Testis (tissue), 5 donors: ENCODE measurements at regions of chr2 and their contacts with region 1.

Region 1: DNA sequence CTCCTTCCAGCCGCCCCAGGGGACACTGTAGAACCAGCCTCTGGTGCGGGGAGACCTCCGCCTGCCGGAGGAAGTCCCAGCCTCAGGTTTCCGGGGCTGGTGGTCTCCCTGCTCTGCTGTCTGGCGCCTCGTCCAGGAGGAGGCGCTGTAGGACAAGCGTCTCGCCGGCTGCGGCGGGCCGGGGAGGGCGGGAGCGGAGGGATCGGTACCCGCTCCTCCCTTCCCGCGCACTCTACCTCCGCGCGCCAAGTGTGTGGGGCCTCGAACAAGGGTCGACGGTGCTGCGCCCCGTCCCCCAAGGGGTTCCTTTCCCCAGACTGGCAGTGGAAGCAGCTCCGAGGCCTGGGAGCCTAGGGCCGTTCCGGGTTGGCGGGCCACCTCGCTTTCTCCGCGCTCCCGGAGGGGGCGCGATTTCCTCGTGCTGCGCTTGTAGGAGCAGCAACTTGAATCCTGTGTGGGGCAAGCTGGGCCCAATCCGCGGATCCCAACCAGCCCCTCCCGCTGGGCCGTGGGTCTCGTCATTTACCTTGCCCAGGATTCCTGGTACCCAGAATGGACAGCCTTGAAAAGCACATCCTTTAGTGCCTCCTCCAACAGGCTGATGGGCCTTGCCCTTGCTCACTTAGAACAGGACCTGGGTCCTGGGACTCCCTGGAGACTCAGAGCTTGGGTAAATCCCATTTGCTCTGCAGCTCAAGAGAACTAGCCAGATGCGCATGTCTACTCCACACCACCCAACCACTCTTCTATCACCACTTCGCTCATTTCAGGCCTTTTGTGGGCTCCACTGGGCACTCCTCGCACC is 10.6 kb upstream of the HOXD4 start:
- DNase-seq: peak; percentile 84
- H3K4me3 ChIP-seq: peak overlapping the region; percentile 87 to 89
- H3K27ac ChIP-seq: peak overlapping the region; percentile 79 to 99
- H3K4me1 ChIP-seq: peaks cover under 1% of the 10 kb centered on the region
- H3K27me3 ChIP-seq: no peaks in the 10 kb centered on the region
- CTCF ChIP-seq: peak; percentile 91 to 98 (median 97)
- POLR2A ChIP-seq: no peak

Region 2: DNA sequence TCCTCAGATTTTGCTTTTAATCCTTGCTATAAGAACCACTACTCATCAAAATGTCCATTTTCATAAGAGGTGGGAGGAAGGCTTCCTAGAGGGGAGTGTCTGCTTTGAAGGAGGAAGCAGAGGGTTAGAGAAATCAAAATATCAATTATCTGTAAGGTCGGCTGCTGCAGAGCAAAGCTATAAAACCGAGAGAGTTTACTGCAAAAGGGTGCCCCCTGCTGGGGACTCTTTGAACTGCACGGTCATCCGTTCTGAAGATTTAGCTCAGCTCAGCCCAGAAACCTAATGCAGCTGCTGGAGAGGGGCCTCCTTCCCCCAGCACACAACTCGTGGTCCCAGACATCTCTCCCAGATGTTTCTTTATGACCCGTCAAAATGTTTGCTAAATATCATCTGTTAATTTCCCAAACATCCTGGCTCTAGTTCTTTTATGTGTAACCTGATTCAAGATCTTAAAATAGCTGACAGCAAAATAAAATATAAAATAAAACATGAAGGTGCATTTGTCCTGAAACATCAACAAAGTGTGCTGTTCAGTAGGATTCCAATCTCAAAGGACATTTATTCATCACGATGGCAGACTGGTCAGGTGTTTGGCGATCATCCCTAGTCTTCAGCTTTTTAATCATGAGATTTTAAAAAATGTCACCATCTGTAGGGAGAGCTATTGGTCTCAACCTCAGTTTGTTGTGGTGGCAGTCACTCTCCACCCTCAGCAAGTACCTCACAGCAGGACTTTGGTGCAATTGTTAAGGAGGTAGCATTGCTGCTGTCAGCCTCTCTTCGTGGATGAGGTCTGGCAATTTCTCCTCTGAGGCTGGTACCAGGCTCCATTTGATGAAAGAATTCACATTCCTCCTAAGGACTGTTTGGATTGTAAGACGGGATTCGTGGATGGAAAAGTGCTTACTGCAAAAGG is 314.4 kb after region 1 on chr2:
- intact Hi-C with region 1: loop called (anchors 10 kb)
- DNase-seq: peak; percentile 95
- H3K4me3 ChIP-seq: no peak overlapping the region
- H3K27ac ChIP-seq: no peak overlapping the region
- H3K4me1 ChIP-seq: peaks cover 7% of the 10 kb centered on the region
- H3K27me3 ChIP-seq: no peaks in the 10 kb centered on the region
- CTCF ChIP-seq: peak; percentile 82 to 99 (median 91)
- POLR2A ChIP-seq: no peak

Region 3: DNA sequence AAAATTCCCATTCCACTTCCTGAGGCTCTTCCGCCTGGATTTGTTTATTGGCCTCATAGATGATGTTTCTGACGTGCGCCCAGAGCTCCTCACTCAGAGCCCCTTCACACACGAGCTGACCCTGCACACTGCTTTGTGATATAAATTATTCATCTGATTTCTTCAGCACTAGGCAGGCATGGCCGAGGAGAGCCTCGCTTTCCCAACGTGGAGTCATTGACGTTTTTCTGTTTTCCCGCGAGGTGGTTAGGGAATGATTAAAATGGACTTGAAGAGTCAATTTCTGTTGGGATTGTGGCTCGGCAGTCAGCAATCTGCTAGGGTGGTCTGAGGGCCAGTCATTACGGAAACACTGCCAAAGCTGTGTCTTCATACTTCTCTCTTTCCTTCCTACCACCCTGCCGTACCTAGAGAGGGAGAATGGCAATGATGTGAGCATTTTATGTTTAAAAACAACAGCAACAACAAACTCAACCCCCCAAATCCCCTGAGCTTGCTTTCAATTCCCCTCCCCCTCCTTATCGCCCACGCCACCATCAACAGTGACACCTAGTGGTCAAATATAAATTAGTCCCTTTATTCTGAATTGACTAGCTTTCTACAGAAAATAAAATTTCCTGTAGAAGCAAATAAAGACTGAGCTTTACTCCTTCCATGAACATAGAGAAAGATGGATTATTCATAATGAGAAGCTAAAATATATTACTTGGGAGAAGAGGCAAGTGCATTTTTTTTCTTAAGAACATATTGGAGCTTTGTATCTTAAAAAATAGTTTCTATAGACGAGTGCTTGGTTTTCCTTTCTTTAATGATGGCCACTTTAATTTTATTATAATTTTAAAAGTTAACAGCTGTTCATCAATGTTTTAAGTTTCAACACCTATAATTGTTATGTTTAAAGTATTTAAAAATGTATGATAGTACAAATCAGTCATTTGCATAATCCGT is 413.7 kb after region 1 on chr2:
- intact Hi-C with region 1: loop called (anchors 1 kb)
- DNase-seq: peak; percentile 40
- H3K4me3 ChIP-seq: peak overlapping the region; percentile 44 to 56
- H3K27ac ChIP-seq: peak overlapping the region; percentile 82
- H3K4me1 ChIP-seq: peaks cover 8% of the 10 kb centered on the region
- H3K27me3 ChIP-seq: no peaks in the 10 kb centered on the region
- CTCF ChIP-seq: peak; percentile 90 to 92 (median 91)
- POLR2A ChIP-seq: no peak